ENCODE measurements at regions of chr11 and their contacts with region 1.

Region 1: GRCh38 chr11:100855466-100856067 is 168.5 kb downstream of the ARHGAP42 start:
- DNase-seq: no peak
- ATAC-seq: peak; percentile 45

Region 2: GRCh38 chr11:100575870-100576705 is 279.5 kb before region 1 on chr11:
- intact Hi-C with region 1: loop called (anchors 5 kb)
- DNase-seq: no peak
- ATAC-seq: peak; percentile 95

Region 3: GRCh38 chr11:100681064-100681502 is 174.5 kb before region 1 on chr11:
- intact Hi-C with region 1: loop called (anchors 2 kb)
- DNase-seq: peak; percentile 79
- ATAC-seq: peak; percentile 72

Region 4: DNA sequence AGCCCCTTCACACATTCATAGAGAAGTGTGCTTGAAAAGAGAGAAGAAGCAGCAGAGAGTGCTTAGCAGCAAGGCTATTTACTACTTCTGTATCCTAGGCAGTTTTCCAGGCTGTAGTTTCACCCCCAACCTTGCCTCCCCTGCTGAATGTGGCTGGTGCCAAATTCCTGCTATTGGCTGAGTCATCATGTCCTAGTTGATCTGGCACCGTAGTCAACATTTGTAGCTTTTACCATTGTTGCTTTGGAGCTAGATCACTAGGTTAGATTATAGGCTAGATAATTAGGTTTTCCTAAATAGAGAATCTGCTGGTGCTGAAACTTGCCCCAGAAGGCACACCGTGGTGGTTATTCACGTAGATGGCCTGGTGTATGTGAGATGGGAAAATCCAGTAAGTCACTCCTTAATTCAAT is 135.8 kb before region 1 on chr11:
- intact Hi-C with region 1: no loop called
- DNase-seq: peak; percentile 42
- ATAC-seq: peak; percentile 97

Region 5: DNA sequence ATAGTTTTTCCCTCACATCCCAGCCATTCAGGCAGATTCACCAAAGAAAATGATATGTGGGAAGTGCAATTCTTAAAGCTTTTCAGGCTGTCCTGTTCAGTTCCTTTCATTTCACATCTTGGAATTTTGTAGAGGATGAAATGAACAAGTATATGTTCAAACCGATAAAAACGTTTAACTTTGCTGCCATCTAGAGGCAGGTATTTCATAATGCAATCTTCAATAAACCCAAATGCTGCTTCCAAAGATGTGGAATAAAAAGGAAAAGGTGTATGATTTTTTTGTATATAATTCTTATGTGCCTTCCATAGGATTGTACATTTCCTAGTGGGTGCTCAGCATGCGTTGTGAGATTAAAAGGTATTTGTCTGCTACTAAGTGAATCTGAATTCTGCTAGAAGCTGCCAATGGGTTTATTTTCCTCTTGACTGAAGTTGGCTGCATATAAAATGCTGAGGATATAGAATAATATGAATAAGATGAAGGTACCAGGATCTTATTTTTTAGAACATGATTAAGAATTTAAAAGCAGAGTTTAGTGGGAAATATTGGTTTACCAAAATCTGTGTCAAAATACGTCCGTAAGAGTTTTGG is 74.7 kb after region 1 on chr11:
- intact Hi-C with region 1: loop called (anchors 10 kb)
- DNase-seq: no peak
- ATAC-seq: peak; percentile 70

Measured in Right ventricle myocardium superior (tissue), 1 donor.